PC-9 (cell line): ENCODE measurements at regions of chr10 and their contacts with region 1.

Region 1: GRCh38 chr10:70227548-70228320 is 5.5 kb downstream of the PPA1 start:
- DNase-seq: peak in 1 of 2 experiments; percentile 13
- H3K4me3 ChIP-seq: no peak overlapping the region
- H3K27ac ChIP-seq: peak overlapping the region; percentile 14
- H3K4me1 ChIP-seq: peaks cover 68% of the 10 kb centered on the region
- H3K27me3 ChIP-seq: no peaks in the 10 kb centered on the region
- CTCF ChIP-seq: no peak

Region 2: DNA sequence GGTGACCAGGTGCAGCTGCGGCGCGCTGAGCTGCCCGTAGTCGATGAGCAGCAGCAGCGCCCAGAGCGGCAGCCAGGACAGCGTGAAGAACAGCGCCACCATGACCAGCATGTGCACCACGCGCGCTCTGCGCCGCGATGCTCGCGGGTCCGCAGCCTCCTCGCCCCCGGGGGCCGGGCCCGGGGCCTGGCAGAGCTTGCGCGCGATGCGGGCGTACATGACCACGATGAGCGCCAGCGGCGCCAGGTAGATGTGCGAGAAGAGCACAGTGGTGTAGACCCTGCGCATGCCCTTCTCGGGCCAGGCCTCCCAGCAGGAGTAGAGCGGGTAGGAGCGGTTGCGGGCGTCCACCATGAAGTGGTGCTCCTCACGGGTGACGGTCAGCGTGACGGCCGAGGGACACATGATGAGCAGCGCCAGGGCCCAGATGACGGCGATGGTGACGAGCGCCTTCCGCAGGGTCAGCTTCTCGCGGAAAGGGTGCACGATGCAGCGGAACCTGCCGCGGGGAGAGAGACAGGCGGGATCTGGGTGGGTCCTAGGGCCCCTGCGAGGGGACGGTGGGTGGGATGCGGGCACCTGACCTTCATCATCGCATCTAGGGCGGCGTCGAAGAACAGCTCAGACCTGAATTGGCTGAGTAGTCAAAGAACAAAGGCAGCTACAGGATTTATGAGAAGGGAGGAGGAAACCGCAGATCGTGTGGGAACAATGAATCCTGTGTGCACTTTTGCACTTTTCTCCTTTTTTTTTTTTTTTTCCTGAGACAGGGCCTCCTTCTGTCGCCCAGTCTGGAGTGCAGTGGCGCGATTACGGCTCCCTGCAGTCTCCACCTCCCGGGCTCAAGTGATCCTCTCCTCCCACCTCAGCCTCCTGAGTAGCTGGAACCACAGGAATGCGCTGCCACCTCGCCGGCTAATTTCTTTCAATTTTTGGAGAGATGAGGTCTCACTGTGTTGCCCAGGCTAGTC is 27.9 kb after region 1 on chr10:
- CTCF ChIA-PET with region 1: interaction called, 13 read pairs
- POLR2A ChIA-PET with region 1: interaction called, 5 read pairs
- intact Hi-C with region 1: loop called (anchors 1 kb)
- DNase-seq: peak; percentile 88 to 94
- H3K4me3 ChIP-seq: no peak overlapping the region
- H3K27ac ChIP-seq: no peak overlapping the region; the same call in 1 of the 2 replicates
- H3K4me1 ChIP-seq: peaks cover 57% of the 10 kb centered on the region
- H3K27me3 ChIP-seq: no peaks in the 10 kb centered on the region
- CTCF ChIP-seq: no peak

Region 3: DNA sequence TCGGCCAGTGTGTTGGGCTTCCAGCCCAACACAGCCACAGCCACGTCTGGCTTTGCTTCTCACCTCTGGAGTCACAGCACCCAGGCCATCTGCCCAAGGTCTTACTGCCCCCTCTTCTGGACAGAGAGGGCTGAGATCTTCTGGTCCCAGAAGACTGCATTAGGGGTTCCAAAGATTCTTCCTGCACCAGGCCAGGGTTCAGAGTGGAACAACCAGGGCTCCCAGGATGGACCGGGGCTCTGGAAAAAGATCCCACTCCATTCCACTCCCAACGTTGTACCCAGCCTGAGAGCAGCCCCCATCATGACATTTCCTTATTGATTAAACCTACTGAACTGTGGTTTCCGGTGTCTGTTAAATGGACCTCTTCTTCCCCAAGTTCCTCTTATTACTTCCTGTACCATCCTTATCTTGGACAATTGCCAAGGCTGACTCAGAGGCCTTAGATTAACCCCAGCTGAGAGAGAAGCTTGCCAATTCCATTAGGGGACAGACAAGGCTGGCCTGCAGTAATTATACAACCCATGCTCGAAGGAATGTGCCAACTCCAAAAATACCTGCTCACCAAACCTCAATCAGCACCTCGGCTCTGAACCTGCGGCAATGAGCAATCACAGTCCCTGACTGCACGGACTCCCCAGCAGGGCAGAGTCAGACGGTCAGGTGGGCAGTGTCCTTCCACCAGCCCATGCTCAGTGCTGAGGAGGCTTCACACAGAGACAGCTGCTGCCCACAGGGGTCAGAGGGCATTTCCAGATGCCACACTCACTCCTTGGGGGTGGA is 103.9 kb after region 1 on chr10:
- CTCF ChIA-PET with region 1: no interaction called
- POLR2A ChIA-PET with region 1: interaction called, 3 read pairs
- intact Hi-C with region 1: loop called (anchors 1 kb)
- DNase-seq: peak; percentile 82 to 98
- H3K4me3 ChIP-seq: no peak overlapping the region
- H3K27ac ChIP-seq: peak overlapping the region; percentile 59
- H3K4me1 ChIP-seq: peaks cover 27% of the 10 kb centered on the region
- H3K27me3 ChIP-seq: no peaks in the 10 kb centered on the region
- CTCF ChIP-seq: peak; percentile 55; the same call in 1 of the 2 replicates

Region 4: DNA sequence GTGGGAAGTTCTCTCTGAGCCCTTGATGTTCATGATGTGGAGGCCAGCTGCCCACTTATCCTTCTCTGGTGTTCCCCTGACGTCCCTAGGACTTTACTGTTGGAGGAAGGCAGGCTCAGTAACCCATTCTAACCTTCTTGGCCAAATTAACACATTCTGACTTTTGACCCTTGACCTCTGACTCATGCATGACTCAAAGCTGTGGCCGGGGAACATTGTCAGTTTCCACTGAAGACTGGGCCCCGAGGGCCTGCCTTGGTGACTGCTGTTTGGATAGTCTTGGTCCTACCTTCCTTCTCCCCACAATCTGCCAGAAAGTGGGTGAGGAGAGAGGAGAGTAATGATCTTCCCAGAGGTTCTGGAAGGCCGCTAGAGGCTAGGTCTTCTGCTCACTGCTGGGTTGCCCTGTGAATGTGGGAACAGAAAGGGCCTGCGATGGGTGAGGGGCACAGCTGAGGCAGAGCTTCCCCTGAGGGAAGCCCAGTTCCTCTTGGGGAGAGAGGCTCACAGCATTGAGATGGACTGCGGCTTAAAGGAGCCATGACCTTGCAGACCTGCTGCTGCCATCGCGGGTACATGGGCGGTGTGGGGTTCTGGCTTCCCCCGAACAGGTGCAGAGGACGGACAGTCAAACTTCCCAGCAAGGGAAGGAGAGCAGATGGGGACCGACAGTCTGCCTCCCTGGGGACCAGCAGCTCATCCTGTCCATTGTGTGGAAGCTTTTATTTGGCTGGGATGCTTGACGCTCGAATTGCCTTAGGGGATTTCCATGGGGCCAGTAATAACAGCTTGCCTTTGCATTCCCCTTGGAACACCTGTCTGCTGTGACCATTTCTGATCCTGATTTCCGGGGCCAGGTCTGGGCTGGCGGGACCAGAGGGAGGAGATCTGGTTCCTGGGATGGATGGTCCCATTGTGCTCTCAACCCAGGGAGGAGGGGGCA is 488.4 kb after region 1 on chr10:
- CTCF ChIA-PET with region 1: no interaction called
- POLR2A ChIA-PET with region 1: no interaction called
- intact Hi-C with region 1: no loop called
- DNase-seq: peak; percentile 69 to 88
- H3K4me3 ChIP-seq: no peak overlapping the region
- H3K27ac ChIP-seq: peak overlapping the region; percentile 41
- H3K4me1 ChIP-seq: peaks cover 31% of the 10 kb centered on the region
- H3K27me3 ChIP-seq: no peaks in the 10 kb centered on the region
- CTCF ChIP-seq: no peak

Region 5: DNA sequence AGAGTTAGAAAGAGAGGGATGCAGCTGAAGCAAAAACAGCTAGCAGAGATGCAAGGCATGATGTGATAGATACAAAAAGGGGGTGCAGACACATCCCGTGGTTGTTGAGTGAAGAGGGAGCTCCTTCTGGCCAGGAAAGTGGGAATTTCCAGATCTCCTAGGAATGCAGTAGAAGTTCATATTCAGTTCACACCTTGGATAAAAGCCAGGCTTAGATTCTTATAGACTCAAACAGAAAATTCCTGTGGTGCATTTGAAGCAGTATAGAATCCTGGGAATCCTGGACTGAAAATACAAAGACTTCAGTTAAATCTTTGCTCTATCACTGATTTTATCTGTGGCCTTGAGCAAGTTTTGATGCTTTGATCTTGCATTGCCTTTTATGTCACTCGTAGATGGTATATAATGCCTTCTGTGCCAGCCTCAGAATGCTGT is 621.9 kb after region 1 on chr10:
- CTCF ChIA-PET with region 1: interaction called, 16 read pairs
- POLR2A ChIA-PET with region 1: no interaction called
- intact Hi-C with region 1: no loop called
- DNase-seq: peak; percentile 40 to 85
- H3K4me3 ChIP-seq: no peak overlapping the region
- H3K27ac ChIP-seq: peak overlapping the region; percentile 68
- H3K4me1 ChIP-seq: peaks cover 60% of the 10 kb centered on the region
- H3K27me3 ChIP-seq: no peaks in the 10 kb centered on the region
- CTCF ChIP-seq: no peak